GM13977 (cell line): ENCODE measurements at regions of chr1 and their contacts with region 1.

Region 1: GRCh38 chr1:88867743-88868521 is 23.4 kb downstream of the GTF2B start:
- DNase-seq: no peak
- CTCF ChIP-seq: no peak

Region 2: GRCh38 chr1:88655685-88656299 is 212.1 kb before region 1 on chr1:
- in situ Hi-C with region 1: loop called (anchors 10 kb)
- DNase-seq: peak; percentile 17
- CTCF ChIP-seq: peak; percentile 55

Region 3: DNA sequence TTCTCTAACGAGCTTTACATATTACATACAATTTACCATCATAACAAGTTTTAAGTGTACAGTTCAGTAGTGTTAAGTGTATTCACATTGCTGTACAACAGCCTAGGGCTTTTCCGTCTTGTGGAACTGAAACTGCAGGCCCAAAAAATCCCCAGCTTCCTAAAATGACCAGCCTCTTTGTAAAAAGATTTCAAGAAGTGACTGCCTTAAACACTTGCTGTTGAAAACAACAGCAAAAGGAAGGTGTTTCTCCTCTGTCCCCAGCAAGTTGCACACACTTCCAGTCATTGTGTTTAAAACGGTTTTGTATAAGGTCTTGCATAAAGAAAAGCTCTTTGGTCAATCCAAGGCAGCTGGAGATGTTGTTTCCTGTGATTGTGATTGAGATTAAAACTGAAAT is 213.1 kb after region 1 on chr1:
- in situ Hi-C with region 1: no loop called
- DNase-seq: no peak
- CTCF ChIP-seq: no peak